MCF 10A (cell line): ENCODE measurements at regions of chr9 and their contacts with region 1.

Region 1: GRCh38 chr9:122810306-122810946 is 10.5 kb downstream of the OR1K1 start:
- DNase-seq: peak; percentile 87
- H3K4me3 Mint-ChIP-seq: no peak overlapping the region
- H3K27ac Mint-ChIP-seq: no peak overlapping the region
- H3K4me1 Mint-ChIP-seq: peaks cover 3% of the 10 kb centered on the region
- H3K27me3 Mint-ChIP-seq: no peaks in the 10 kb centered on the region
- CTCF ChIP-seq: peak; percentile 76

Region 2: GRCh38 chr9:122464633-122465567 is 345.5 kb before region 1 on chr9:
- CTCF ChIA-PET with region 1: interaction called, 209 read pairs
- POLR2A ChIA-PET with region 1: interaction called, 3 read pairs
- intact Hi-C with region 1: loop called (anchors 1 kb)
- DNase-seq: peak; percentile 95
- H3K4me3 Mint-ChIP-seq: peak overlapping the region; percentile 71
- H3K27ac Mint-ChIP-seq: peak overlapping the region; percentile 41
- H3K4me1 Mint-ChIP-seq: peaks cover 5% of the 10 kb centered on the region
- H3K27me3 Mint-ChIP-seq: peaks cover 71% of the 10 kb centered on the region
- CTCF ChIP-seq: peak; percentile 78

Region 3: GRCh38 chr9:122474561-122474960 is 335.9 kb before region 1 on chr9:
- CTCF ChIA-PET with region 1: interaction called, 10 read pairs
- POLR2A ChIA-PET with region 1: no interaction called
- intact Hi-C with region 1: no loop called
- DNase-seq: no peak
- H3K4me3 Mint-ChIP-seq: no peak overlapping the region
- H3K27ac Mint-ChIP-seq: no peak overlapping the region
- H3K4me1 Mint-ChIP-seq: no peaks in the 10 kb centered on the region
- H3K27me3 Mint-ChIP-seq: peaks cover 81% of the 10 kb centered on the region
- CTCF ChIP-seq: no peak

Region 4: GRCh38 chr9:122498883-122499288 is 311.5 kb before region 1 on chr9:
- CTCF ChIA-PET with region 1: interaction called, 52 read pairs
- POLR2A ChIA-PET with region 1: no interaction called
- intact Hi-C with region 1: loop called (anchors 1 kb)
- DNase-seq: peak; percentile 82
- H3K4me3 Mint-ChIP-seq: no peak overlapping the region
- H3K27ac Mint-ChIP-seq: no peak overlapping the region
- H3K4me1 Mint-ChIP-seq: no peaks in the 10 kb centered on the region
- H3K27me3 Mint-ChIP-seq: no peaks in the 10 kb centered on the region
- CTCF ChIP-seq: peak; percentile 72

Region 5: GRCh38 chr9:122821278-122821943 is 11.0 kb after region 1 on chr9:
- CTCF ChIA-PET with region 1: interaction called, 14 read pairs
- POLR2A ChIA-PET with region 1: no interaction called
- intact Hi-C with region 1: no loop called
- DNase-seq: no peak
- H3K4me3 Mint-ChIP-seq: no peak overlapping the region
- H3K27ac Mint-ChIP-seq: no peak overlapping the region
- H3K4me1 Mint-ChIP-seq: peaks cover under 1% of the 10 kb centered on the region
- H3K27me3 Mint-ChIP-seq: no peaks in the 10 kb centered on the region
- CTCF ChIP-seq: no peak